ENCODE measurements at regions of chr2 and their contacts with region 1.

Region 1: GRCh38 chr2:40127890-40128557 is 323.9 kb downstream of the SLC8A1 start:
- DNase-seq: peak; percentile 89
- H3K4me3 ChIP-seq: no peak overlapping the region
- H3K27ac ChIP-seq: peak overlapping the region; percentile 93
- H3K27me3 ChIP-seq: no peaks in the 10 kb centered on the region
- CTCF ChIP-seq: no peak

Region 2: DNA sequence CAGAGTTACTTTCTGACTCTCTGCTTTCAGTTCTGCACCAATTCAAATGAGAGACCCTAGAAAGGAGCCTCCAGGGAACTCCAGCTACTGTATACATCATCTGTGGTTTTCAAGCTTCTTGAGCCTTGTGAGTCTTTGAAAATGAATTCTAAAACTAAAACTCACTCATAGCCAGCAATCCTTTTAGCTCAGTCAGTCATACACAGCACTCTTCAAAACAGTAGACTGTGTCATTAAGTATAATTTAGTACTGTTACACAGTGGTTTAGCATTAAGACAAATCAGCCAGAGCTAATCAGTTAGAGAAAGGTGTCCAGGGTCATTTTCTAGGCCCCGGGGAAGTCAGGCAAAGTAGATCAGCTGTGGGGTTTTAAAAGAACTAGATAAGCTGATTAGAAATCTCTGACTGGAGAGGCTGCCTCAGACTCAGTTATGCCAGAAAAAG is 26.9 kb before region 1 on chr2:
- CTCF ChIA-PET with region 1: interaction called, 3 read pairs
- POLR2A ChIA-PET with region 1: interaction called, 13 read pairs
- DNase-seq: peak; percentile 74
- H3K4me3 ChIP-seq: no peak overlapping the region
- H3K27ac ChIP-seq: peak overlapping the region; percentile 81
- H3K27me3 ChIP-seq: no peaks in the 10 kb centered on the region
- CTCF ChIP-seq: no peak

Measured in AG04450 (cell line).